ENCODE measurements at regions of chr11 and their contacts with region 1.

Region 1: GRCh38 chr11:117426269-117426685 is 98.6 kb downstream of the CEP164 start:
- DNase-seq: peak; percentile 57 to 99
- H3K4me3 ChIP-seq: no peak overlapping the region; a peak in 2 of 8 replicates
- H3K27ac ChIP-seq: no peak overlapping the region
- H3K4me1 ChIP-seq: peaks cover 0 to 7% (median 4%) of the 10 kb centered on the region in 4 experiments; a peak in 6 of 7 replicates
- H3K27me3 ChIP-seq: no peaks in the 10 kb centered on the region; a peak in 1 of 7 replicates
- CTCF ChIP-seq: peak; percentile 93 to 99 (median 97)
- EP300 ChIP-seq: no peak
- POLR2A ChIP-seq: no peak
- RAD21 ChIP-seq: peak; percentile 96 to 98

Region 2: DNA sequence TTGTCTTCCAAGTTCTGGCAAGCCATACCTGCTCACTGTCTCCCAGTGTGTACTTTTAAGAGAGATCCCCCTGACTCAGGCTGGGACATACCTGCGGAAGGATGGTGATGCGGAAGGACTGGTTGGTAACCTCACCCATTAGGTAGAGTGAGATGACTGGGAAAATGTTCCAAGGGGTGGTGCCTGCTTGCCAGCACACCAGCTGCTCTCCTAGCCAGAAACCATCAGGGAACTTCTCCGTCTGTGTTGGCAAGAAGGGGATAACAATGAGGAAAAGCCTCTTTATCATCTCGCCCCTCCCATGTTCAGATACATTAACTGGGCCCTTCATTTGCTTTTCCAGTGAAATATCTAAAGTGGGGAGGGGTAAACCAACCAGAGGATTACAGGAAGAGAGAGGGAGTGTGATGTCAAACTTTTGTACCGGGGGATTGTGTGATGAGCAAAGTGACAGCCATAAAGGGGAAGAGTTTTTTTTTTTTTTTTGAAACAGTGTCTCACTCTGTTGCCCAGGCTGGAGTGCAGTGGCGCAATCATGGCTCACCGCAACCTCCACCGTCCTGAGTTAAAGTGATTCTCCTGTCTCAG is 135.4 kb before region 1 on chr11 and contains the start of gene BACE1-AS:
- CTCF ChIA-PET with region 1: no interaction called
- POLR2A ChIA-PET with region 1: no interaction called
- DNase-seq: no peak
- H3K4me3 ChIP-seq: no peak within 1 kb of the TSS
- H3K27ac ChIP-seq: no peak within 1 kb of the TSS
- H3K4me1 ChIP-seq: no peaks in the 10 kb centered on the region
- H3K27me3 ChIP-seq: no peaks in the 10 kb centered on the region
- CTCF ChIP-seq: no peak
- EP300 ChIP-seq: no peak
- POLR2A ChIP-seq: no peak
- RAD21 ChIP-seq: no peak
- total RNA-seq, gene BACE1-AS: 12.2 and 14.9 TPM in 2 replicates

Region 3: DNA sequence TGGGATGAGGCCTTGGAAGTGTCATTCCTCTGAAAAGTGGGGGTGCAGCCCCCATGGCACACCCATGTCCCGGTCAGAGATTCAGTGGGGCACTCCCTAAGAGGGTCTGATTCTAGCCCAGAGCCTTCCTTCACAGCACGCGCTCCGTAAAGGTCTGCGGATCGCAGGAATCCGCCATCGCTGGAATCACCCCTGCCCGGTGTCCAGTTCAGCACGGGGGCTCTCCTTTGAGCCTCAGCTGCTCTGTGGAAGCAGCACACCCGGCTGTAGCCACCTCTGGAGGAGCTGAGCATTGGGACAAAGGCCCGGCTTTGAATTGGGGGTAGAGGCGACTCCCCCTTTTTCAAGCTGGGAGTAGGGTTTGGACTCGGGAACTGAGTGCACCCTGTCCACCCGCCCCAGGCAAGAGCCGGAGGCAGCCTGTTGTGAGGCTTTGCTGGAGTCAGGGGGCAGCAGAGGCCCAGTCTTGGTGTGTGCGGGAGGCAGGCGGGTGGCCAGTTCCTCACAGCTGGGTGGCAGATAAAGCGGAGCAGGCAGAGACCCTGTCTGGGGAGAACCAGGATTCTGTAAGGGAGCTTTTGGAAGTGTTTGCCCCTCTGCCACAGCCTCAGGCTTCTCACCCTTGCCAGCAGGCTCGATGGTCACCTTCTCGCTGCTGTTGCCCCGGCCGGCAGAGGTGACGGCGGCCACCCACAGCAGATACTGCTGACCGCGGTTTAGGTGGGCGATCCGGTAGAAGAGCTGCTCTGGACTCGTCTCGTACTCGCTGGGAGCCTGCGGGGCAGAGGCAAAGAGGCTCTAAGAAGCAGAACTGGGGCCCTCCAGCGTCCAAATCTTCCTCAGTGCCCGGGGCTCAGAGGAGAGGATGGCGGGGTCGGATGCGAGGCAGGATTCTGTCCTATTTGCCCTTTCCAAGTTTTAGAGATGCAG is 17.3 kb after region 1 on chr11:
- CTCF ChIA-PET with region 1: interaction called, 75 read pairs
- POLR2A ChIA-PET with region 1: no interaction called
- DNase-seq: peak; percentile 27 to 77
- H3K4me3 ChIP-seq: no peak overlapping the region
- H3K27ac ChIP-seq: no peak overlapping the region
- H3K4me1 ChIP-seq: peaks cover 0 to 8% (median 1%) of the 10 kb centered on the region in 4 experiments; a peak in 3 of 7 replicates
- H3K27me3 ChIP-seq: peaks cover 0 to 6% (median 0%) of the 10 kb centered on the region in 4 experiments; a peak in 4 of 7 replicates
- CTCF ChIP-seq: peak; percentile 86 to 92 (median 91)
- EP300 ChIP-seq: no peak
- POLR2A ChIP-seq: no peak
- RAD21 ChIP-seq: peak; percentile 95 to 98

Region 4: DNA sequence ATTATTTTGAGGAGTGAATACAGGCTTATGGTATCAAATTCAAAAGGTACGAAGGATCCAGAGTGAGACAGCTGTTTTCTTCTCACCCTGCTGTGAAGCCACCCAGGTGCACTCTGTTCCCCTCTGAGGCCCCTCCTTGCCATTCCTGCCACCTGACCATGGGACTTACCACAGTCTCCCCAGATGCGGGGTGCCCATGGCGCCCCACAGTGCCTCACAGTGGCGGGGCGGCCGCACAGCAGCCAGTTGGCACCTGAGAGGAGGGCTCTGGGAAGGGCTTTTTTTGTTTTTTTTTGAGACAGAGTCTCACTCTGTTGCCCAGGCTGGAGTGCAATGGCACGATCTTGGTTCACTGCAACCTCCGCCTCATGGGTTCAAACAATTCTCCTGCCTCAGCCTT is 53.1 kb after region 1 on chr11:
- CTCF ChIA-PET with region 1: interaction called, 29 read pairs
- POLR2A ChIA-PET with region 1: no interaction called
- DNase-seq: peak in 1 of 2 experiments; percentile 71
- H3K4me3 ChIP-seq: no peak overlapping the region
- H3K27ac ChIP-seq: no peak overlapping the region
- H3K4me1 ChIP-seq: peaks cover 0 to 12% (median 6%) of the 10 kb centered on the region in 4 experiments; a peak in 6 of 7 replicates
- H3K27me3 ChIP-seq: no peaks in the 10 kb centered on the region; a peak in 1 of 7 replicates
- CTCF ChIP-seq: peak; percentile 60 to 67 (median 62)
- EP300 ChIP-seq: no peak
- POLR2A ChIP-seq: no peak
- RAD21 ChIP-seq: peak; percentile 48 to 64

Region 5: DNA sequence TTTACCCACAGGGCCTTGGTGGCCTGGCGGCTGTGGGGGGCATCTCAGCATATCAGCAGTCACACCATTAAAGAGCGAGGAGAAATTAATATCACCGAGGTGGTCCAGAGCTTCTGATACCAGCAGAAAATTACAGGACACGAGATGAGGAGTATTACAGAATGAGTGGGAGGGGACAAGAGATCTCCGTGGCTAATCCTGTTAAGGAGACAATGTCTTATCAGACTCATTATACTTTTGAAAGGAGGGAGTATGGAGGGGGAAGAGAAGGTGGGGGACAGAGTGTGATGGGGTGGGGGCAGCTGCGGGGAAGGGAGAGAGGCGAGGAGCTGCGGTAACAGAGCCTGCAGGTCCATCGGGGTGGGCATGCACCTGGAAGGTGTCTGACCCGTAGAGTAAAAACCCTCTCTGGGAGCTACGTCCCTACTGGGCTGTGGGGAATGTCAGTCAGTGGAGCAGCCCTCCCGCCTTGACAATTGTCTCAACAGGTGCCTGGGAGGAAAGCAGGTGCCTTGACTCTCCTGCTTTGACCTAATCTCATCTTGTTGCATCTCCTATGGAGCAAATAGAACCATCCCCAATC is 125.6 kb after region 1 on chr11:
- CTCF ChIA-PET with region 1: interaction called, 14 read pairs
- POLR2A ChIA-PET with region 1: no interaction called
- DNase-seq: no peak
- H3K4me3 ChIP-seq: no peak overlapping the region
- H3K27ac ChIP-seq: no peak overlapping the region
- H3K4me1 ChIP-seq: peaks cover 0 to 12% (median 7%) of the 10 kb centered on the region in 4 experiments; a peak in 6 of 7 replicates
- H3K27me3 ChIP-seq: peaks cover 0 to 5% (median 0%) of the 10 kb centered on the region in 4 experiments; a peak in 3 of 7 replicates
- CTCF ChIP-seq: no peak
- EP300 ChIP-seq: no peak
- POLR2A ChIP-seq: no peak
- RAD21 ChIP-seq: no peak

Region 6: DNA sequence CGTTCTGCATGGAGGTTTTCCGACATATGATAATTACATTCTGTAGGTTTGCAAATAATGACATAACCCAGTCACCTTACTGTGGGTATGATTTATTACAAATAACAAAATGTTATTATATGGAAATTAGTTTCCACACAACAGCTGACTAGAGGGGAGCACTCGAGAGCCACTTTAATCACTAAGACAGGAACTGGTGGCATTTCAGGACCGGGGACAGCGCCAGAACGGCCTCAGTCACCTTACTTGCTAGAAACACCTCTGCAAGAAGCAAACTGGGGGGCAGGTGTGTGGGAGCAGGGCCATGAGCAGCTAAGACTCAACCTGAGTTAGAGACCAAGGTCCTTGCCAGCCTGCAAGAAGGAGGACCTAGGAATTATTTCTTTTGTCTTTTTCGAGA is 170.8 kb after region 1 on chr11:
- CTCF ChIA-PET with region 1: interaction called, 13 read pairs
- POLR2A ChIA-PET with region 1: no interaction called
- DNase-seq: peak in 1 of 2 experiments; percentile 85
- H3K4me3 ChIP-seq: no peak overlapping the region
- H3K27ac ChIP-seq: no peak overlapping the region
- H3K4me1 ChIP-seq: peaks cover 3 to 14% (median 9%) of the 10 kb centered on the region in 4 experiments
- H3K27me3 ChIP-seq: no peaks in the 10 kb centered on the region; a peak in 1 of 7 replicates
- CTCF ChIP-seq: no peak
- EP300 ChIP-seq: no peak
- POLR2A ChIP-seq: no peak
- RAD21 ChIP-seq: peak in 1 of 2 experiments; percentile 16; a peak in 1 of 4 replicates

Region 7: DNA sequence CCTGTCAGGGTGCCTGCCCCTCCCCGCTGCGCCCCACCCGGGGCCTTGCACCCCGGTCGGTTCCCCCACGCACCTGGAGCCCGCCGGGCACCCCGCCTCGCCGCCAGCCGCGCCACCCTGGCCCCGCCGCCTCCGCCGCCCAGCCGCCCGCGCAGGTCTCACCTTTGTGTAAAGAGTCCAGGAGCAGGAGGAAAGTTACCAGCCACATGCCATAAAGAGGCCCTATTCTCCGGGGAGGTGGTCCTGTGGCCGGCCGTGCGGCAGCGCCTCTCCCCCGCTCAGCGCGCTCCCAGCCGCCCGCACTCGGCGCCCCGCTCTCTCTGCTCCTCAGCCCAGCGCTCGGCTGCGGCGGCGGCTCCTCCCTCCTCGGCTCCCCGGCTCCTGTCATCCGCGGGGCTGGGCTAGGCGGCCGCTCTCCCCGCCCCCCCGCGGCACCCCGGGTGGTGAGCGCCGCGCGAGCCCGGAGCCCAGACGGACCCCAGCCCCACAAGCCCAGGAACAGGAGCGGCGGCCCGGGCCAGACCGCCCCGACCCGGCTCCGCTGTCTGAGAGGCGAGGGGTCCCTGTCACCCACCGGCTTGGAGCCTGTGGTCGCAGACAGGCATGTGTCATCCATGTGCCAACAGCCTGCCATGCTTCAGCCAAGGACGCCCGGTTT is 370.7 kb after region 1 on chr11 and contains the start of gene DSCAML1:
- CTCF ChIA-PET with region 1: interaction called, 10 read pairs
- POLR2A ChIA-PET with region 1: no interaction called
- DNase-seq: peak in 1 of 2 experiments; percentile 77
- H3K4me3 ChIP-seq: peak within 1 kb of the TSS; percentile 23 to 72 (median 54)
- H3K27ac ChIP-seq: no peak within 1 kb of the TSS
- H3K4me1 ChIP-seq: peaks cover 0 to 13% (median 6%) of the 10 kb centered on the region in 4 experiments; a peak in 5 of 7 replicates
- H3K27me3 ChIP-seq: peaks cover 27 to 66% (median 58%) of the 10 kb centered on the region in 4 experiments
- CTCF ChIP-seq: no peak
- EP300 ChIP-seq: no peak
- POLR2A ChIP-seq: no peak
- RAD21 ChIP-seq: no peak
- total RNA-seq, gene DSCAML1: 0.19 and 0.27 TPM in 2 replicates